Sigmoid colon (tissue), 7 donors: ENCODE measurements at regions of chr1 and their contacts with region 1.

Region 1: GRCh38 chr1:181424786-181425403 is 58.4 kb upstream of the CACNA1E start:
- DNase-seq: peak; percentile 77
- H3K4me3 ChIP-seq: no peak overlapping the region
- H3K27ac ChIP-seq: no peak overlapping the region
- H3K4me1 ChIP-seq: peaks cover 0 to 4% (median 0%) of the 10 kb centered on the region in 4 donors
- H3K27me3 ChIP-seq: peaks cover 0 to 29% (median 6%) of the 10 kb centered on the region in 3 donors
- CTCF ChIP-seq: peak; percentile 68 to 99 (median 96)
- EP300 ChIP-seq: no peak
- POLR2A ChIP-seq: no peak

Region 2: GRCh38 chr1:181189691-181190363 is 235.1 kb before region 1 on chr1:
- intact Hi-C with region 1: loop called (anchors 1 kb)
- DNase-seq: no peak
- H3K4me3 ChIP-seq: peak overlapping the region in 3 of 4 donors; percentile 11 to 34 (median 31)
- H3K27ac ChIP-seq: no peak overlapping the region
- H3K4me1 ChIP-seq: peaks cover 0 to 8% (median 8%) of the 10 kb centered on the region in 4 donors
- H3K27me3 ChIP-seq: no peaks in the 10 kb centered on the region
- CTCF ChIP-seq: peak; percentile 53 to 99 (median 84)
- EP300 ChIP-seq: no peak
- POLR2A ChIP-seq: no peak

Region 3: GRCh38 chr1:181406989-181407388 is 17.9 kb before region 1 on chr1:
- intact Hi-C with region 1: no loop called
- DNase-seq: no peak
- H3K4me3 ChIP-seq: no peak overlapping the region
- H3K27ac ChIP-seq: no peak overlapping the region
- H3K4me1 ChIP-seq: no peaks in the 10 kb centered on the region
- H3K27me3 ChIP-seq: no peaks in the 10 kb centered on the region
- CTCF ChIP-seq: no peak
- EP300 ChIP-seq: no peak
- POLR2A ChIP-seq: no peak

Region 4: DNA sequence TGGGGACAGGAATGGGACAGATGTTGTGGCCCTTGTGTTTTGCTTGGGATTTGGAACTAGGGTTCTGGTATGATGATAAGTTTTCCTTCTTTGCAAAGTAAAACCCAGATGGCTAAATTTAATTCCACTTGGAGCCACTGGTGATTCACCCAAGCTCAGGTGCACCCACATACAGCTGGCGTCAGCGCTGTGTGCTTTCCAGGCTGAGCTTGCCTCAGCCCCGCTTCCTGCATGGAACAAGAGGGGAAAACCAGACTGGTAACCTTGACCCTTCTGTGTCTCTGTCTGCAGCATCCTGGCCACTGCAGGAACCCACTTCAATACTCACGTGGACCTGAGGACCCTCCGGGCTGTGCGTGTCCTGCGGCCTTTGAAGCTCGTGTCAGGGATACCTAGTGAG is 152.6 kb after region 1 on chr1:
- intact Hi-C with region 1: no loop called
- DNase-seq: no peak
- H3K4me3 ChIP-seq: no peak overlapping the region
- H3K27ac ChIP-seq: no peak overlapping the region
- H3K4me1 ChIP-seq: no peaks in the 10 kb centered on the region
- H3K27me3 ChIP-seq: no peaks in the 10 kb centered on the region
- CTCF ChIP-seq: no peak
- EP300 ChIP-seq: no peak
- POLR2A ChIP-seq: no peak